CD8-positive, alpha-beta T cell (primary cell): ENCODE measurements at regions of chr5 and their contacts with region 1.

Region 1: GRCh38 chr5:154072414-154073171 is 33.8 kb downstream of the MFAP3 start:
- DNase-seq: peak; percentile 67 to 90 (median 84)
- ATAC-seq: peak; percentile 93
- H3K4me3 ChIP-seq: no peak overlapping the region
- H3K4me3 Mint-ChIP-seq: peak overlapping the region; percentile 49
- H3K27ac ChIP-seq: no peak overlapping the region
- H3K27ac Mint-ChIP-seq: no peak overlapping the region
- H3K4me1 ChIP-seq: peaks cover 10% of the 10 kb centered on the region
- H3K4me1 Mint-ChIP-seq: peaks cover 12% of the 10 kb centered on the region
- H3K27me3 ChIP-seq: no peaks in the 10 kb centered on the region
- H3K27me3 Mint-ChIP-seq: peaks cover 3% of the 10 kb centered on the region
- CTCF ChIP-seq: peak; percentile 97

Region 2: DNA sequence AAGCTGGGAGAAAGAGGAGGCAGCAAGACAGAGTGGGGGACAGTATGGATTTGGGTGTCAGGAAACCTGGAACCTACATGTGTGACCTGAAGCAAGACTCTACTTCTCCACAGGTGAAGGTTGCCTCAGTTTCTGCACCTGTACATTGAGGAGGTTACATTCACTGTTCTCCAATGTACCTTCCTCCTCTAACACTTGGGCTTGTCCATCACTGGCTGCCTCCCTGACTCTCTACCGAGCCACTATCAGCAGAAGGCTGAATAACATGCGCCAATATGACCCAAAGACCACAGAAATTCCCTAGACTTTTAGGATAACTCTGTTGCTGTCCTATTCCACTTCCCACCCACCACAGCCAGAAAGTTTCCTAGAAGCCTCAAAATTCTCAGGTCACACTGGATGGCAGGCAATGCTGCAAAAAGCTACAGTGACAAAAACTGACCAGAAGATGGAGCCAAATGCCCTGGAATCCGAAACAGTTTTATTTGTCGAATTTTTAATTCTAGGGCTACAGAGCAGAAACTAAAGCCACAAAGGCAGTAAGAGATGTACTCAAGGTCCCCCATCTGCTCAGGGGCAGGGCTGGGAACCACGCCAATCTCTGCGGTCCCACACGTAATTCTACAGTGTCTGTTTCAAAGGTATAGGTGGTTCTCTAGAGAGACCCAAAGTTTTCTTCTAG is 98.3 kb before region 1 on chr5:
- CTCF ChIA-PET with region 1: interaction called, 7 read pairs
- POLR2A ChIA-PET with region 1: no interaction called
- intact Hi-C with region 1: loop called in 1 of 2 experiments (anchors 1 kb)
- DNase-seq: peak in 5 of 9 experiments; percentile 17 to 60 (median 19)
- ATAC-seq: peak; percentile 38
- H3K4me3 ChIP-seq: no peak overlapping the region
- H3K4me3 Mint-ChIP-seq: no peak overlapping the region
- H3K27ac ChIP-seq: no peak overlapping the region
- H3K27ac Mint-ChIP-seq: no peak overlapping the region
- H3K4me1 ChIP-seq: no peaks in the 10 kb centered on the region
- H3K4me1 Mint-ChIP-seq: no peaks in the 10 kb centered on the region
- H3K27me3 ChIP-seq: no peaks in the 10 kb centered on the region
- H3K27me3 Mint-ChIP-seq: peaks cover 13% of the 10 kb centered on the region
- CTCF ChIP-seq: peak; percentile 63

Region 3: GRCh38 chr5:154058055-154059038 is 14.2 kb before region 1 on chr5:
- CTCF ChIA-PET with region 1: interaction called, 35 read pairs
- POLR2A ChIA-PET with region 1: interaction called, 4 read pairs
- intact Hi-C with region 1: no loop called
- DNase-seq: no peak
- ATAC-seq: no peak
- H3K4me3 ChIP-seq: no peak overlapping the region
- H3K4me3 Mint-ChIP-seq: no peak overlapping the region
- H3K27ac ChIP-seq: peak overlapping the region in 1 of 2 experiments; percentile 36
- H3K27ac Mint-ChIP-seq: peak overlapping the region; percentile 84
- H3K4me1 ChIP-seq: peaks cover 10% of the 10 kb centered on the region
- H3K4me1 Mint-ChIP-seq: peaks cover 24% of the 10 kb centered on the region
- H3K27me3 ChIP-seq: no peaks in the 10 kb centered on the region
- H3K27me3 Mint-ChIP-seq: no peaks in the 10 kb centered on the region
- CTCF ChIP-seq: no peak

Region 4: GRCh38 chr5:154179846-154180710 is 107.5 kb after region 1 on chr5:
- CTCF ChIA-PET with region 1: interaction called, 22 read pairs
- POLR2A ChIA-PET with region 1: no interaction called
- intact Hi-C with region 1: loop called (anchors 1 kb)
- DNase-seq: peak in 6 of 9 experiments; percentile 29 to 71 (median 52)
- ATAC-seq: peak; percentile 95
- H3K4me3 ChIP-seq: no peak overlapping the region
- H3K4me3 Mint-ChIP-seq: no peak overlapping the region
- H3K27ac ChIP-seq: no peak overlapping the region
- H3K27ac Mint-ChIP-seq: no peak overlapping the region
- H3K4me1 ChIP-seq: no peaks in the 10 kb centered on the region
- H3K4me1 Mint-ChIP-seq: peaks cover 1% of the 10 kb centered on the region
- H3K27me3 ChIP-seq: peaks cover 0 to 3% of the 10 kb centered on the region in 2 experiments
- H3K27me3 Mint-ChIP-seq: peaks cover 15% of the 10 kb centered on the region
- CTCF ChIP-seq: peak; percentile 70

Region 5: GRCh38 chr5:154196955-154197652 is 124.5 kb after region 1 on chr5:
- CTCF ChIA-PET with region 1: interaction called, 19 read pairs
- POLR2A ChIA-PET with region 1: no interaction called
- intact Hi-C with region 1: no loop called
- DNase-seq: peak in 2 of 9 experiments; percentile 30 to 57
- ATAC-seq: peak; percentile 10
- H3K4me3 ChIP-seq: no peak overlapping the region
- H3K4me3 Mint-ChIP-seq: peak overlapping the region; percentile 35
- H3K27ac ChIP-seq: peak overlapping the region in 1 of 2 experiments; percentile 72
- H3K27ac Mint-ChIP-seq: peak overlapping the region; percentile 94
- H3K4me1 ChIP-seq: peaks cover 57% of the 10 kb centered on the region
- H3K4me1 Mint-ChIP-seq: peaks cover 68% of the 10 kb centered on the region
- H3K27me3 ChIP-seq: no peaks in the 10 kb centered on the region
- H3K27me3 Mint-ChIP-seq: no peaks in the 10 kb centered on the region
- CTCF ChIP-seq: no peak

Region 6: GRCh38 chr5:154405078-154405792 is 332.6 kb after region 1 on chr5:
- CTCF ChIA-PET with region 1: interaction called, 45 read pairs
- POLR2A ChIA-PET with region 1: no interaction called
- intact Hi-C with region 1: loop called (anchors 1 kb)
- DNase-seq: peak; percentile 44 to 81 (median 70)
- ATAC-seq: peak; percentile 100
- H3K4me3 ChIP-seq: peak overlapping the region in 1 of 2 experiments; percentile 10
- H3K4me3 Mint-ChIP-seq: peak overlapping the region; percentile 47
- H3K27ac ChIP-seq: no peak overlapping the region
- H3K27ac Mint-ChIP-seq: no peak overlapping the region
- H3K4me1 ChIP-seq: peaks cover 8% of the 10 kb centered on the region
- H3K4me1 Mint-ChIP-seq: peaks cover 9% of the 10 kb centered on the region
- H3K27me3 ChIP-seq: no peaks in the 10 kb centered on the region
- H3K27me3 Mint-ChIP-seq: no peaks in the 10 kb centered on the region
- CTCF ChIP-seq: peak; percentile 81

Region 7: GRCh38 chr5:154630410-154630809 is 557.8 kb after region 1 on chr5:
- CTCF ChIA-PET with region 1: interaction called, 3 read pairs
- POLR2A ChIA-PET with region 1: no interaction called
- intact Hi-C with region 1: loop called in 1 of 2 experiments (anchors 10 kb)
- DNase-seq: no peak
- ATAC-seq: no peak
- H3K4me3 ChIP-seq: no peak overlapping the region
- H3K4me3 Mint-ChIP-seq: no peak overlapping the region
- H3K27ac ChIP-seq: no peak overlapping the region
- H3K27ac Mint-ChIP-seq: no peak overlapping the region
- H3K4me1 ChIP-seq: no peaks in the 10 kb centered on the region
- H3K4me1 Mint-ChIP-seq: no peaks in the 10 kb centered on the region
- H3K27me3 ChIP-seq: no peaks in the 10 kb centered on the region
- H3K27me3 Mint-ChIP-seq: peaks cover 6% of the 10 kb centered on the region
- CTCF ChIP-seq: no peak

Region 8: GRCh38 chr5:154701110-154701572 is 628.5 kb after region 1 on chr5:
- CTCF ChIA-PET with region 1: no interaction called
- POLR2A ChIA-PET with region 1: no interaction called
- intact Hi-C with region 1: no loop called
- DNase-seq: no peak
- ATAC-seq: no peak
- H3K4me3 ChIP-seq: no peak overlapping the region
- H3K4me3 Mint-ChIP-seq: no peak overlapping the region
- H3K27ac ChIP-seq: no peak overlapping the region
- H3K27ac Mint-ChIP-seq: no peak overlapping the region
- H3K4me1 ChIP-seq: no peaks in the 10 kb centered on the region
- H3K4me1 Mint-ChIP-seq: no peaks in the 10 kb centered on the region
- H3K27me3 ChIP-seq: no peaks in the 10 kb centered on the region
- H3K27me3 Mint-ChIP-seq: peaks cover 9% of the 10 kb centered on the region
- CTCF ChIP-seq: no peak